Mucosa of descending colon (tissue), 3 donors: ENCODE measurements at regions of chr9 and their contacts with region 1.

Region 1: DNA sequence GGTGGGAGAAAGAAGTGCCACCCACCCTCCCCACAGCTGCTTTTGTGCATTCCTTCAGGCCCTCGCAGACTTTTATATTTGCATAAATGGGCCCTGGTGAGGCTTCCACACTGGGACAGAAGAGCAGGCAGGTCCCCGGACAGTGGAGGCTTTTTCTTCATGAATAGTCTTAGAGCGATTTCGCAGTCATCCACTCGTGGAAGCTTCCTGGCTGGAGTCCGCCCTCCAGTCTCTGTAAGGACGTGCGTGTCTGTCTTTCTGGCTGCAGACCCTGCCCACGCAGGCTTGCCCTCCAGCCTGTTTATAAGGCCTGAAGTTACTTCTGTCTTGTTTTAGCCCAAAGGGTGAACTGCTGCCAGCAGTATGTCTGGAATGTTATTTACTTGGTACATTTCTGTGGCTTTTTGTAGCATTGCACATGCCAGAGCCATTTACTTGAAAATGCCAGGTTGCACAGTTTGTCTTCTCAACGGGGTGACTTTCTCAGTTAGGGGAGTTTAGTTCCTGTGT is 195.7 kb downstream of the AOPEP start:
- DNase-seq: no peak
- ATAC-seq: peak; percentile 7
- H3K4me3 ChIP-seq: no peak overlapping the region
- H3K4me1 ChIP-seq: peaks cover 13% of the 10 kb centered on the region
- CTCF ChIP-seq: no peak

Region 2: GRCh38 chr9:93945400-93946337 is 976.5 kb before region 1 on chr9:
- intact Hi-C with region 1: no loop called
- DNase-seq: peak; percentile 21 to 52 (median 36)
- ATAC-seq: peak; percentile 39
- H3K4me3 ChIP-seq: no peak overlapping the region
- H3K4me1 ChIP-seq: peaks cover 1% of the 10 kb centered on the region
- CTCF ChIP-seq: no peak

Region 3: DNA sequence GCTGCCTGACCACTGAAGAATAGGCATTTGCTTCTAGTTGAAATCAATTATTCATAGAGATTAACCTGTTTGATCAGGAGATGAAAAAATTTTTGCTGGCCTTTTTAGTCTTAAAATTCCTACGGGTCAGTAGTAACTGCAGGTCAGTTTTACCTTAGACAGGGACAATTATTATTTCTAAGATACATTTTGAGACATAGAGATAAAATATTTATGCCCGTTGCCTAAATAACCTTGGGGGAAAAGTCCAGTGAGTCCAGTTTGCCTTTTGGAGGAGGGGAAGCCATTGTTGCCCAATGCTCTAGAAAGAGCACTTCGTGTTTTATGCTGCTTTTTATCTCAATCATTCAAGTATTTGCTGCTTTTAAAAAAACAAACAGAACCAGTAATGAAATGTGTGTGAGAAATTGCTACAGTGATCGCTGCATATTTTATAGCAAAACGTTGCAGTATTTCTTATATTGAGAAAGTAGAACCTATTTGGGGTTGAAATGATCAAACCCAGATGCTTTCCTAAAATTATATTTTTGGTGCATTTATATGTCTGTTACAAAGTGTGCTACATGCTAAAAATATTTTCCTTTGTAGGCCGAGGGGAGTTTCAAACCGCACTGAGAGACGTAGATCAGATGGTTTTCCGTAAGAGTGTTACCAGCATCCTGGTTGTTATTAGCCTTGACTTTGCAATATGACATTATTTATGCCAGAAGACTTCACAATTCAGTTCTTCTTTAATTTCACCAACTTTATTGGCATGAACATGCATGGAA is 71.1 kb after region 1 on chr9:
- intact Hi-C with region 1: loop called in 1 of 2 experiments (anchors 10 kb)
- DNase-seq: no peak
- ATAC-seq: no peak
- H3K4me3 ChIP-seq: no peak overlapping the region
- H3K4me1 ChIP-seq: no peaks in the 10 kb centered on the region
- CTCF ChIP-seq: no peak